RWPE1 (cell line): ENCODE measurements at regions of chr2 and their contacts with region 1.

Region 1: DNA sequence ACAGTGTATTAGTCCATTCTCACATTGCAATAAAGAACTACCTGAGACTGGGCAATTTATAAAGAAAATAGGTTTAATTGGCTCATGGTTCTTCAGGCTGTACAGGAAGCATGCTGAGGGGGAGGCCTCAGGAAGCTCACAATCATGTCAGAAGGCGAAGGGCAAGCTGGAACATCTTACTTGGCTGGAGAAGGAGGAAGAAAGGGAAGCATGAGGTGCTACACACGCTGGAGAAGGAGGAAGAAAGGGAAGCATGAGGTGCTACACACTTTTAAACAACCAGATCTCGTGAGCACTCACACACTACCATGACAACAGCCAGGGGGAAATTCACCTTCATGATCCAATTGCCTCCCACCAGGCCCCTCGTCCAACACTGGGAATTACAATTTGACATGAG is 95.3 kb upstream of the FAM110C start:
- DNase-seq: no peak
- H3K27ac ChIP-seq: no peak overlapping the region
- CTCF ChIP-seq: no peak

Region 2: DNA sequence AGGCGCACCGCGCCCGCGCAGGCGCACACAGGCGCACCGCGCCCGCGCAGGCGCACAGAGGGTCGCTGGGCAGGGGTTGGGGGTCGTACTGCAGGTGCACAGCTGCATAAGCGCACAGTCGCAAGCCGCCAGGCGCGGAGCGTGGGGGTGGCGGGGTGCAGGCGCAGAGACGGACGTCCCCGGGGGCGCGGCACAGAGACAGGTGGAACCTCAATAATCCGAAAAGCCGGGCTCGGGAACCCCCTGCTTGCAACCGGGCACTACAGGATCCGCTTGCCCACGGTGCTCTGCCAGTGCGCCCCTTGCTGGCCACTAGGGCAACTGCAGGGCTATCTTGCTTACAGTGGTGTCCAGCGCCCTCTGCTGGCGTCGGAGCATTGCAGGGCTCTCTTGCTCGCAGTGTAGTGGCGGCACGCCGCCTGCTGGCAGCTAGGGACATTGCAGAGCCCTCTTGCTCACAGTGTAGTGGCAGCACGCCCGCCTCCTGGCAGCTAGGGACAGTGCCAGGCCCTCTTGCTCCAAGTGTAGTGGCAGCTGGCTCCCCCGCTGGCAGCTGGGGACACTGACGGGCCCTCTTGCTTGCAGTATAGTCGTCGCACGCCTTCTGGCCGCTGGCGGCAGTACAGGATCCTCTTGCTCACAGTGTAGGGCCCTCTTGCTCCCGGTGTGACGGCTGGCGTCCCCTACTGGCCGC is 130.2 kb before region 1 on chr2:
- CTCF ChIA-PET with region 1: interaction called, 12 read pairs
- POLR2A ChIA-PET with region 1: no interaction called
- DNase-seq: no peak
- H3K27ac ChIP-seq: no peak overlapping the region
- CTCF ChIP-seq: peak; percentile 52

Region 3: DNA sequence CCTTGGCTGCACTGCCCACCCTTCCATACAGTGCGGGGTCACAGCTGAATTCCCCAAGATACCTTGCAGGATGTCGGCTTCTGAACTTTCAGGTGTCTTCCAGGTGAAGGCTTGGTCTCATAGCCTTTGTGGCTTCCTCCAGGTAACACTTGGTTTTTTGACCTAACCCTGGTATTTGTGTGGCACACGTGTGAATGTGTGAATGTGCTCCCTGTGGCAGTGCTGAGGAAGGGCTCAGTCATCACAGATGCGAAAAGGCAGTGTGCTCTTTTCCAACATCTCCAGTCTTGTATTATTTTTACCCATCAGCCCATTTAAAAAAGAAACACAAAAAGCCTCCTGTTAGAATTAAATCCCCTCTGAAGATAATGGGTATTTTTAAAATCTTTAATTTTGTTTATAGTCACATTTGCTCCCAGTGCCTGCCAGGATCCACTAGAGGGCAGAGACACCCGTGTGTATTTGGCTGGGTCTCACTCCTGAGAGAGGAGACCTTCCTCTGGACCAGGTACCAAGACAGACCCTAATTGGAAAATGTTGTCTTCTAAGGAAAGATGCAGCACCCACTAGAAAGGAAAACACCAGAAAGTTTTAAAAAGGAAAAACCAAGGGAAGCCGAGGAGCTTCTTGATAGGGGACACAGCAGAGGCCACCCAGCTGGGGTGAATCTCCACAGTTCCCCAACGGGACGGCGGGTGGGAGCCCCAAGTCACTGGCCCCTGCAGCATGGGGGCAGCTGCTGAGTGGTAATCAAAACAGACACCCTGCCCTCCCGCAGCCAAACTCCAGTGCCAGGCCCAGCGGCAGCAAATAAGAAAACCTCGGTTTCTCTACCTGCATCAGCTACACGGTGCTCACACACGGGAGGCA is 123.0 kb before region 1 on chr2:
- CTCF ChIA-PET with region 1: interaction called, 28 read pairs
- POLR2A ChIA-PET with region 1: no interaction called
- DNase-seq: no peak
- H3K27ac ChIP-seq: no peak overlapping the region
- CTCF ChIP-seq: peak; percentile 82